ENCODE measurements at regions of chr15 and their contacts with region 1.

Region 1: DNA sequence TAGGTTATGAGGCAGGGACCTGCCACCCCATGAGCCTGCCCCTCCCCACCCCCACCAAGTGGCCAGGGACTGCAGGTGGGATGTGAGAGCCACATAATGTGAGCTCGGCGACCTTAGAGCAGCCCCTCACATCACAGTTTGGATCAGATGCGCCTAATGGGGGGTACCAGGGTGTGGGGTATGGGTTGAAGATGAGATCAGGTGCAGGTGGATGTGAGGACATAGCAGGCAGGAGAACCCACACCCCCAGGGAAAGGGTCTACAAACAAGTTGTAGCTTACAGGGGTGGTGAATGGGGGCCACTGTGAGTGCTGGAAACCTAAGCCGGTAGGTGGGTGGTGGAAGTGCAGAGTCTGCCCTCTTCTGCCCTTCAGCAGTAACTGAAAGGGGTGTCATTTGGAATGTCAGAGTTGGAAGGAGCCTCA is 94.0 kb downstream of the CORO2B start:
- DNase-seq: peak in 1 of 2 donors; percentile 52
- ATAC-seq: no peak
- H3K4me3 ChIP-seq: no peak overlapping the region
- H3K27ac ChIP-seq: no peak overlapping the region
- H3K4me1 ChIP-seq: no peaks in the 10 kb centered on the region
- H3K27me3 ChIP-seq: no peaks in the 10 kb centered on the region

Region 2: DNA sequence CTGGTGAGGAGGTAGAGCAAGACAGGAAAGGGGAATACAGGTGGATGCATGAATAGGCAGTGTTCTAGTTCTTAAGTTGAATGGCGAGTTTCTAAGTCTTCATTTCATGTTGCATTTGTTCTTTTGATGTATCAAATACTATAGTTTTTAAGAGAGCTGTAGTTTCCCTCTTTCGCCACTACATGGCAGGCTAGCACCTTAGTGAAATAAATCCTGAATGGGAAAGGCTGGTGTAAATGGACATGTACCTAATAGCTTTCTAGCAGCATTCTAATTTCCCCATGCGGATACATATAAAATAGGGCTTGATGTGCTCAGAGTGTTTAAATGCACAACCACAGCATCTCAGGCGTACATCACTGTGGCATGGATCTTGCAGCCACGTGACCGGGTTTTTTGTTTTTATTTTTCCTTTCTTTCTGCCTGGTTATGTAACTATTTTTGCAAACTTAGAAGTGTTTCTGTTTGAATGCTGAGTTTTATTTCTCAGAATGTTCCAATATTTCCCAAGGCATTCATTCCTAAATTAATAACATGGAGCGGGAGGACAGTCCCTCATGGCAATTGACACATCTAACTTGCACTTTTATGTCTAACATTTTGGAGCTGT is 419.8 kb before region 1 on chr15:
- intact Hi-C with region 1: loop called (anchors 1 to 5 kb)
- DNase-seq: no peak
- ATAC-seq: peak; percentile 66
- H3K4me3 ChIP-seq: no peak overlapping the region
- H3K27ac ChIP-seq: no peak overlapping the region
- H3K4me1 ChIP-seq: no peaks in the 10 kb centered on the region
- H3K27me3 ChIP-seq: no peaks in the 10 kb centered on the region

Region 3: GRCh38 chr15:68431792-68432401 is 240.9 kb before region 1 on chr15 and contains the start of gene ITGA11:
- intact Hi-C with region 1: no loop called
- DNase-seq: peak; percentile 87 to 93
- ATAC-seq: peak; percentile 84
- H3K4me3 ChIP-seq: peak within 1 kb of the TSS; percentile 67 to 92
- H3K27ac ChIP-seq: peak within 1 kb of the TSS; percentile 34 to 78
- H3K4me1 ChIP-seq: peaks cover 5 to 6% of the 10 kb centered on the region in 2 donors
- H3K27me3 ChIP-seq: no peaks in the 10 kb centered on the region
- total RNA-seq, gene ITGA11: 138 to 154 TPM

Region 4: GRCh38 chr15:68550481-68551295 is 122.1 kb before region 1 on chr15:
- intact Hi-C with region 1: loop called in 1 of 2 experiments (anchors 2 kb)
- DNase-seq: peak; percentile 75 to 91
- ATAC-seq: peak; percentile 74
- H3K4me3 ChIP-seq: no peak overlapping the region
- H3K27ac ChIP-seq: no peak overlapping the region
- H3K4me1 ChIP-seq: no peaks in the 10 kb centered on the region
- H3K27me3 ChIP-seq: no peaks in the 10 kb centered on the region

Region 5: GRCh38 chr15:68559345-68560310 is 113.2 kb before region 1 on chr15:
- intact Hi-C with region 1: loop called in 1 of 2 experiments (anchors 2 kb)
- DNase-seq: peak; percentile 83 to 95
- ATAC-seq: peak; percentile 95
- H3K4me3 ChIP-seq: peak overlapping the region; percentile 15 to 27
- H3K27ac ChIP-seq: no peak overlapping the region
- H3K4me1 ChIP-seq: no peaks in the 10 kb centered on the region
- H3K27me3 ChIP-seq: no peaks in the 10 kb centered on the region

Region 6: DNA sequence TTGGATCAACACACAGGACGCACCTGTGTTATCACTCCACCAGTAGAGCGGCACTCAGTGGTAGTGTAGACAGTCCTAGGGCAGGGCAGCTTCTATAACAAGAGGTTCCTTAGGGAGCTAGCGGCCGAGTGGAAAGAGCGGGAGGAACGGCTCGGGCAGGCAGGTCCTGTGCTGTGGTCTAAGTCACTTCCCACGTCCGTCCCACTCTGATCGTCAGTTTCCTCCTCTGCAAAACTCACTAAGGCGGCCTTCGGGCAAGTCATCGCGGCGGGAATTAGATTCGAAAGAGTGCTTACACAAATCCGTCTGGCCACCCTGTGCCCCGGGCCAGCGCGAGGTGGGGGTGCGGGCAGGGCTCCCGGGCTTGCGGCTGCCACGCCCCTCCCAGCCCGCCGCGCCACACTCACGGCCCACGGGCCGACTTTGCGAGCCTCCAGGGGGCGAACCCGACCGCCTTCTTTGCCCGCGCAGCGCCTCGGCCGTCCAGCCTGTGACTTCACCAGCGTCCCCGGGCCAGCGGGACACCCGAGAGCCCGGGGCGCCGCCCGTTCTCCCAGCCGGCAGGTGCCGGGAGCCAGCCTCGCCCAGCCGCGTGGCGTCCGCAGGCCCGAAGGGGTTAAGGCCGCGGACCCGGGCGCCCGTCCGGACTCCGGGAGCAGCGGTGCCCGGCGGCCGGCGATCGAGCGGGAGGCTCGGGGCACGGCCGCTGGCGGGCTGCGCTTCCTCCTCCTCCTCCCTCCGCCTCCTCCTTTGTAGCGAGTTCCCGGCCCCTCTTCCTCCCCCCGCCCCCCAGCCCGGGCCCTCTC is 94.4 kb before region 1 on chr15:
- intact Hi-C with region 1: loop called in 1 of 2 experiments (anchors 1 kb)
- DNase-seq: peak; percentile 85 to 94
- ATAC-seq: peak; percentile 81
- H3K4me3 ChIP-seq: peak overlapping the region; percentile 76 to 80
- H3K27ac ChIP-seq: no peak overlapping the region
- H3K4me1 ChIP-seq: no peaks in the 10 kb centered on the region
- H3K27me3 ChIP-seq: no peaks in the 10 kb centered on the region

Region 7: DNA sequence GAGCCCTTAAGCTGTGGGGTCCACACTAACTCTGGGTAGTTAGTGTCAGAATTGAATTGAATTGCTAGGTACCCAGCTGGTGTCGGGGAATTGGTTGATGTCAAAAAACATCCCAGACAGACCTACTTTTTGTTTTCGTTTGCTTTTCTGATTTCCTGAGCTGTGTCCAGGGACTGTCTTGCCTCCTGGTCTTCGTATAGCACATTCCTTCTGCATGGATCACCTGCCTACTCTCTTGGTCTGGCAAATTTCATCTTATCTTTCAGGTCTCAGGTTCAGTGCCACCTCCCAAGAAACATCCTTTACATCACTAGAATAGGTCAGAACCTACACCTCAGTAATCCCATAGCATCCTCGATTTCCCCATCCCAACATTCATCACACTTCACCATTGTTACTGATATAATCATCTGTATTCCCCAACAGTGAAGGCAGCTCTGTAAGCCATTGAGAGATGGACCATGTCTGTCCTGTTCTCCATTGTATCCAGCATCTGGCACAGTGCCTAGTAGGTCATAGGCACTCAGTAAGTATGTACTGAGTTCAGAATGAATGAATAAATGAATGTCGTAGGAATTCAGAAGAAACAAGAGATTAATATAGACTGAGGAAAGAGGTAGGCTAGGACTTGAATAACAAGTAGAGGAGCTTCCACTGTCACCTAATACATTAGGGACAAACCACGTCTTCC is 66.7 kb after region 1 on chr15:
- intact Hi-C with region 1: no loop called
- DNase-seq: no peak
- ATAC-seq: no peak
- H3K4me3 ChIP-seq: no peak overlapping the region
- H3K27ac ChIP-seq: no peak overlapping the region
- H3K4me1 ChIP-seq: no peaks in the 10 kb centered on the region
- H3K27me3 ChIP-seq: no peaks in the 10 kb centered on the region

Measured in aorta (tissue), 5 donors.